Activated CD8-positive, alpha-beta T cell treated with anti-CD3 and anti-CD28 coated beads, Interleukin-2, amount 10 ng/mL, durations not matched to agents 7 days and 5 days (primary cell): ENCODE measurements at regions of chr10 and their contacts with region 1.

Region 1: DNA sequence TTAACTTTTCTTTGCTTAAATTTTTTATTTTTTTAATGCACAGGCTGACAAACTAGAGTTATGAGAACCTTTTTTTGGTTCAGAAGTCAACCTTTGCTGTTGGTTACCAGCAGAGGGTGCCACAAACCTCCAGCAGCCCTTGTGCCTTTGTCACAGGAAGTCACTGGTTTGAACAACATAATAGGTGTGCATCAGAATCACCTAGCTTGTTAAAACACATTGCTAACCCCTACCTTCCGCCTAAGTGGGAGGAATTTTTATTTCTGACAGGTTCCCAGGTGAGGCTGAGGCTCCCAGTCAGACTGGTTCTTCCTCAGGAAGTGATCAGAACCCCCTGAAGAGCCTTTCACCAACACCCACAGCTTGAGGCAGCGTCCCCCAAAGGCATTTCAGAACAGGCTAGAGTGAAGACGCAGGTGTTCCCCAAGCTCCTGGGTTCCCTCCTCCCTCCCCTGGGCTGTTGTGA is 22.6 kb upstream of the VDAC2 start:
- DNase-seq: peak; percentile 85
- ATAC-seq: peak; percentile 92
- H3K4me3 Mint-ChIP-seq: no peak overlapping the region
- H3K27ac Mint-ChIP-seq: peak overlapping the region; percentile 93
- H3K4me1 Mint-ChIP-seq: peaks cover 19% of the 10 kb centered on the region
- H3K27me3 Mint-ChIP-seq: no peaks in the 10 kb centered on the region

Region 2: GRCh38 chr10:74871595-74872382 is 316.2 kb before region 1 on chr10:
- CTCF ChIA-PET with region 1: no interaction called
- POLR2A ChIA-PET with region 1: no interaction called
- DNase-seq: no peak
- ATAC-seq: peak; percentile 80
- H3K4me3 Mint-ChIP-seq: no peak overlapping the region
- H3K27ac Mint-ChIP-seq: no peak overlapping the region
- H3K4me1 Mint-ChIP-seq: peaks cover 35% of the 10 kb centered on the region
- H3K27me3 Mint-ChIP-seq: no peaks in the 10 kb centered on the region

Region 3: GRCh38 chr10:75111367-75111906 is 76.6 kb before region 1 on chr10 and contains the start of gene SAMD8:
- CTCF ChIA-PET with region 1: interaction called, 11 read pairs
- POLR2A ChIA-PET with region 1: interaction called, 8 read pairs
- DNase-seq: peak; percentile 98
- ATAC-seq: peak; percentile 90
- H3K4me3 Mint-ChIP-seq: peak within 1 kb of the TSS; percentile 80
- H3K27ac Mint-ChIP-seq: peak within 1 kb of the TSS; percentile 88
- H3K4me1 Mint-ChIP-seq: peaks cover 48% of the 10 kb centered on the region
- H3K27me3 Mint-ChIP-seq: no peaks in the 10 kb centered on the region
- total RNA-seq, gene SAMD8: 17.4 to 18.2 TPM

Region 4: DNA sequence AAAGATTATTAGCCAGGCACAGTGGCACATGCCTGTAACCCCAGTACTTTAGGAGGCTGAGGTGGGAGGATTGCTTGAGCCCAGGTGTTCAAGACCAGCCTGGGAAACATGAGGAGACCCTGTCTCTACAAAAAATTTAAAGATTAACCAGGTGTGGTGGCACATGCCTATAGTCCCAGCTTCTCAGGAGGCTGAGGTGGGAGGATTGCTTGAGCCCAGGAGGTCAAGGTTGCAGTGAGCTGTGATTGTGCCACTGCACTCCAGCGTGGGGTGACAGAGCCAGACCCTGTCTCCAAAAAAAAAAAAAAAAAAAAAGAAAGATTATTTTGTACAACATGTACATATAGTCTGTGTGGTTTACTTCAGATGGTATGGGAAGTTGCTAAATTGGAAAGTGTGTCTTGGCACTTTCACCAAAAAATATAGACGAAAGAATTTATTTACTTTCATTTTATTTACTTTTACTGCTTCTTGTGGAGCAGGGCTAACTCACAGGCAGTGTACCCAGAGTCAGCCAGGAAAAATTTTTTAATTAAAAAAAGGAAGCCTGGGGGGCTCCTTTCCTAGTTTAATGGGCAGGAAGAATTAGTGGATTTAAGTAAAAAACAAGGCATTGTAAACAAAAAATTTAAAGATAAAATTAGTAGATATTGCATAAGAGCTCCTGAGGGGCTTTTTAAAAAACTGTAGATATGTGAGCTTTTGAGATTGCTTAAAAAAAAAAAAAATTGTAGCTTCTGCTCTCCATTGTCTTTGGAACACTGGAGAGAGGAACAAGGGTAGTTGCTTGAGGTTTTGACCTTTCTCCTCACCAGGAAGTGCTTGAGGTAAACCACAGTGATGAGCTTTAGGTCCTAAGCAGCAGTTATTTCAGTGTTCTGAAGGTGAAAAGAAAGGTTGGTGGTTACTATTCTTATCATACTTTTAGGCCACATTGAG is 22.0 kb before region 1 on chr10:
- CTCF ChIA-PET with region 1: interaction called, 14 read pairs
- POLR2A ChIA-PET with region 1: no interaction called
- DNase-seq: peak; percentile 64
- ATAC-seq: peak; percentile 76
- H3K4me3 Mint-ChIP-seq: peak overlapping the region; percentile 64
- H3K27ac Mint-ChIP-seq: peak overlapping the region; percentile 94
- H3K4me1 Mint-ChIP-seq: peaks cover 63% of the 10 kb centered on the region
- H3K27me3 Mint-ChIP-seq: no peaks in the 10 kb centered on the region

Region 5: DNA sequence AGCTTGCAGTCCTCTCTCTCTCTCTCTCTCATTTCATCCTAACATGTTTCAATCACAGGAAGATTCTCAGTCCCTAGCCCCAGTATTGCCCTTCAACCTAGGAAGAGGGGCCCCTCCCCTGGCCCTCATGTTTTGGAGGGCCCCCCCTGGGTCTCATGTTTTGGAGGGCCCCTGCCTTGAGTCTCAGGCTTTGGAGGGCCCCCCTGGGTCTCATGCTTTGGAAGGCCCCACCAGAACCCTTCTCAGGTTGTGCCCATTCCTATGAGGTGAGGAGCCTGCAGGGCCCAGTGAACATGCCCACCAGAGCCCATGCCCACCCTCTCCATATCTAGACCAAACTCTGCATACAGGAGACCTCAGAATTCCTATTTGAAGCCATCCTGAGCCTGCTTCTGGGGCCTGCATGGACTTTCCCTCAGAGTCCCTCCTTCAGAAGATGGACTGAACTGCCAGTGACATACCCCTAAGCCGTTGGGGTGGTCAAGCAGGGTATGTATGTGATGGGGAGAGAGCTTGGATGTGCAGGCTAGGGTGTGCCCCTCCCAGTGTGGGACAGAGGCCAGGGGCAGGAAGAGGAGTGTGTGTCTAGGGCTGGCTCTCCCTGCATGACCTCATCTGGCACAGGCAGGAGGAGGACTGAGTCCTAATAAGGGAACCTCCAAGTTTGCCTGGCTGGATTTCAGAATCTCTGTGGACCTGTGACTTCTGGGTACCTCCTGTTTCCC is 14.5 kb after region 1 on chr10:
- CTCF ChIA-PET with region 1: interaction called, 58 read pairs
- POLR2A ChIA-PET with region 1: interaction called, 3 read pairs
- DNase-seq: no peak
- ATAC-seq: no peak
- H3K4me3 Mint-ChIP-seq: no peak overlapping the region
- H3K27ac Mint-ChIP-seq: no peak overlapping the region
- H3K4me1 Mint-ChIP-seq: peaks cover 11% of the 10 kb centered on the region
- H3K27me3 Mint-ChIP-seq: no peaks in the 10 kb centered on the region

Region 6: DNA sequence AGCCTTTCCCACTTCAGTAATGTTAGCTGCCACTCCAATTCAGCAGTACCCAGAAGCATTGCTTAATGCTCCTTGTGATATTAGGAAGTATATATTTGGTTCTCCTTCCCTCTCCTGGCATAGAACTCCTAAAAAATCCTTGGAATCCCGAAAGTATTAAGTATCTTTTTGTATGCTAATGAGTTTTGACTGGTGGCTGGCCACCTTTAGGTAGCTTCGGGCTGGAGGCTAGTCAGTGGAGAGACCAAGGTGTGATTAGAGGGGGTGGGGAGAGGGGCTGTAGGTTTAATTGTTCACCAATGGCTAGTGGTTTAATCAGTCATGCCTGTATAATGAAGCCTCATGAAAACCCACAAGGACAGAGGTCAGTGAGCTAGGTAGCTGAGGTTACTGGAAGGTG is 35.5 kb after region 1 on chr10:
- CTCF ChIA-PET with region 1: interaction called, 279 read pairs
- POLR2A ChIA-PET with region 1: no interaction called
- DNase-seq: no peak
- ATAC-seq: no peak
- H3K4me3 Mint-ChIP-seq: no peak overlapping the region
- H3K27ac Mint-ChIP-seq: no peak overlapping the region
- H3K4me1 Mint-ChIP-seq: peaks cover 43% of the 10 kb centered on the region
- H3K27me3 Mint-ChIP-seq: no peaks in the 10 kb centered on the region

Region 7: GRCh38 chr10:75431180-75432111 is 243.5 kb after region 1 on chr10 and contains the start of gene LRMDA:
- CTCF ChIA-PET with region 1: no interaction called
- POLR2A ChIA-PET with region 1: no interaction called
- DNase-seq: no peak
- ATAC-seq: no peak
- H3K4me3 Mint-ChIP-seq: no peak within 1 kb of the TSS
- H3K27ac Mint-ChIP-seq: no peak within 1 kb of the TSS
- H3K4me1 Mint-ChIP-seq: peaks cover 2% of the 10 kb centered on the region
- H3K27me3 Mint-ChIP-seq: peaks cover 46% of the 10 kb centered on the region
- total RNA-seq, gene LRMDA: not detected